Activated CD4-positive, alpha-beta T cell treated with anti-CD3 and anti-CD28 coated beads, Interleukin-2, amount 10 ng/mL, durations not matched to agents 24 days and 14 days (primary cell): ENCODE measurements at regions of chr20 and their contacts with region 1.

Region 1: GRCh38 chr20:31723319-31724078 is 831 bp upstream of the BCL2L1 start:
- DNase-seq: peak; percentile 99
- H3K4me3 Mint-ChIP-seq: peak overlapping the region; percentile 98
- H3K27ac Mint-ChIP-seq: peak overlapping the region; percentile 98
- H3K4me1 Mint-ChIP-seq: peaks cover 19% of the 10 kb centered on the region
- H3K27me3 Mint-ChIP-seq: no peaks in the 10 kb centered on the region

Region 2: GRCh38 chr20:31514159-31515071 is 209.1 kb before region 1 on chr20 and contains the start of gene HM13:
- intact Hi-C with region 1: loop called (anchors 2 kb)
- DNase-seq: peak; percentile 97
- H3K4me3 Mint-ChIP-seq: no peak within 1 kb of the TSS
- H3K27ac Mint-ChIP-seq: peak within 1 kb of the TSS; percentile 45
- H3K4me1 Mint-ChIP-seq: peaks cover 10% of the 10 kb centered on the region
- H3K27me3 Mint-ChIP-seq: no peaks in the 10 kb centered on the region
- total RNA-seq, gene HM13: 181 and 193 TPM in 2 replicates

Region 3: GRCh38 chr20:31572701-31573554 is 150.6 kb before region 1 on chr20:
- intact Hi-C with region 1: loop called (anchors 2 kb)
- DNase-seq: peak; percentile 95
- H3K4me3 Mint-ChIP-seq: peak overlapping the region; percentile 92
- H3K27ac Mint-ChIP-seq: peak overlapping the region; percentile 91
- H3K4me1 Mint-ChIP-seq: peaks cover 19% of the 10 kb centered on the region
- H3K27me3 Mint-ChIP-seq: peaks cover 2% of the 10 kb centered on the region

Region 4: DNA sequence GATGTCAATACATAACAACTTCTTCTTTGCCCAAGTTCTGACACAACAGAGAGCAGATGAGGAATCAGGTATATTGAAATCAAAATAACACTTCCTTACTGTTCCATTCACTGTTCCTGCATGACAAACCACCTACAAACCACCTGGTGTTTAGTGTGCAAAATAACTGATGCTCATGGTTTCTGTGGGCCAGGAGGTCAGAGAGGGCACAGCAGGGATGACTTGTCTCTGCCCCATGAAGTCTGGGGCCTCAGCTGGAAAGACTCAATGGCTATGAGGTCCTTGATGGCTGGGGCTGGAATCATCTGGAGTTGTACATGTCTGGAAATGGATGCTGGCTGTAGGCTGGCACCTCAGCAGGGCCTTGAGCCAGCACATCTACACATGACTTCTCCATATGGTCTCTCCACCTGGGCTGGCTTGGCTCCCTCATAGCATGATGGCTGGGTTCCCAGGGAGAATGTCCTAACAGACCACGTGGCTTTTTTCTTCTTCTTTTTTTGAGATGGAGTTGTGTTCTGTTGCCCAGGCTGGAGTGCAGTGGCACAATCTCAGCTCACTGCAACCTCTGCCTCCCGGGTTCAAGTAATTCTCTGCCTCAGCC is 93.2 kb before region 1 on chr20:
- intact Hi-C with region 1: loop called (anchors 1 kb)
- DNase-seq: no peak
- H3K4me3 Mint-ChIP-seq: no peak overlapping the region
- H3K27ac Mint-ChIP-seq: no peak overlapping the region
- H3K4me1 Mint-ChIP-seq: no peaks in the 10 kb centered on the region
- H3K27me3 Mint-ChIP-seq: no peaks in the 10 kb centered on the region

Region 5: GRCh38 chr20:31661625-31662371 is 61.7 kb before region 1 on chr20:
- intact Hi-C with region 1: loop called (anchors 1 kb)
- DNase-seq: peak; percentile 92
- H3K4me3 Mint-ChIP-seq: peak overlapping the region; percentile 78
- H3K27ac Mint-ChIP-seq: peak overlapping the region; percentile 89
- H3K4me1 Mint-ChIP-seq: peaks cover 47% of the 10 kb centered on the region
- H3K27me3 Mint-ChIP-seq: no peaks in the 10 kb centered on the region

Region 6: DNA sequence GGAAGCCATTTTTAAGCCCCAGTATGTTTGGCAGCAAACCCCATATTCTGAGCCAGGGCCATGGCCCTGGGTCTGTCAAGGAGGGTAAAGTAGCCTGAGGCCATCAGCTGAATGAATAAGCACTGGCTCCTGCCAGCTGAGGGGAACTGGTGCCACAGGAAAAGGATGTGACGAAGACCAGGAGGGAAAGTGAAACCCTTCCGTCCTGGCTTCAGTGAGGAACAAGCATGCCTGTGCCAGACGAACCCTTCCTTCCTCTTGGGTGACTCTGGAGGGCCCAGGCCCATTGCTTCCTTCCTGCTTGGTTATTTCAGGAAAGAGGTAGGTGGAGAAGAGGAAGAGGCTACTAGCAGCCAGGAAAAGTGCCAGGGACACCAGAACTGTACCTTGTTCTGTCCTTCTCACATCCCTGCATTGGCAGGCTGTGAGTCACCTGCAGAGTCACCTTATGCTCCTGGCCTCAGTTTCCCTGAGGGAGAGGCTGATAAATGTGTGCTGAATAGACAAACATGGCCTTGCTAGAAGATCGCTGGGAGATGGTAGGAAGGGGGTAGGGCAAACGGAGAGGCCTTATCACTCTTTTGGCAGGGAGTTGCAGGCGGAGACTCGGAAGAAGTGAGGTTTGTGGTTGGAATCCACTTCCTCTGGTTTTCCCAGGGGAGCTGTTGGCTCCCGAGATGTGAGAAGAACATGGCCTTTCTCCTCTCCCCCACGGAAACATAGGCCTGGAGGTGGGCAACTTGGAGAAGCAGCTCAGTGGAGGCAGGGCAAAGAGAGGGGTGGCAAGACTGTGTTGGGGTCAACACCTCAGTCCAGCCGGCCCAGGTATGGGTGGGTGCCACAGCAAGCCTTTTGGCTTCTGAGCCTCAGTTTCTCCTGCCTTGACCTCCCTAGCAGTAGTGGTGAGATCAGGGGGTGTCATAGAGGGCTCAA is 48.3 kb before region 1 on chr20:
- intact Hi-C with region 1: loop called (anchors 1 kb)
- DNase-seq: peak; percentile 92
- H3K4me3 Mint-ChIP-seq: peak overlapping the region; percentile 83
- H3K27ac Mint-ChIP-seq: peak overlapping the region; percentile 89
- H3K4me1 Mint-ChIP-seq: peaks cover 80% of the 10 kb centered on the region
- H3K27me3 Mint-ChIP-seq: no peaks in the 10 kb centered on the region

Region 7: GRCh38 chr20:31738729-31739561 is 15.4 kb after region 1 on chr20 and contains the start of gene TPX2:
- intact Hi-C with region 1: loop called (anchors 1 kb)
- DNase-seq: peak; percentile 95
- H3K4me3 Mint-ChIP-seq: no peak within 1 kb of the TSS
- H3K27ac Mint-ChIP-seq: peak within 1 kb of the TSS; percentile 48
- H3K4me1 Mint-ChIP-seq: peaks cover 4% of the 10 kb centered on the region
- H3K27me3 Mint-ChIP-seq: peaks cover 4% of the 10 kb centered on the region
- total RNA-seq, gene TPX2: 60.1 and 61.3 TPM in 2 replicates